ENCODE measurements at regions of chr17 and their contacts with region 1.

Region 1: GRCh38 chr17:20244671-20245070 is 222.7 kb downstream of the LGALS9B start:
- DNase-seq: no peak
- ATAC-seq: no peak
- H3K4me3 ChIP-seq: no peak overlapping the region
- H3K27ac ChIP-seq: no peak overlapping the region
- H3K4me1 ChIP-seq: no peaks in the 10 kb centered on the region
- H3K27me3 ChIP-seq: no peaks in the 10 kb centered on the region

Region 2: GRCh38 chr17:19904924-19905323 is 339.7 kb before region 1 on chr17:
- intact Hi-C with region 1: no loop called
- DNase-seq: peak; percentile 38 to 83 (median 78)
- ATAC-seq: peak; percentile 45 to 51
- H3K4me3 ChIP-seq: no peak overlapping the region
- H3K27ac ChIP-seq: no peak overlapping the region
- H3K4me1 ChIP-seq: no peaks in the 10 kb centered on the region
- H3K27me3 ChIP-seq: no peaks in the 10 kb centered on the region

Region 3: GRCh38 chr17:20189302-20189701 is 55.4 kb before region 1 on chr17:
- intact Hi-C with region 1: loop called in 1 of 4 experiments (anchors 10 kb)
- DNase-seq: no peak
- ATAC-seq: peak in 1 of 2 donors; percentile 26
- H3K4me3 ChIP-seq: no peak overlapping the region
- H3K27ac ChIP-seq: no peak overlapping the region
- H3K4me1 ChIP-seq: no peaks in the 10 kb centered on the region
- H3K27me3 ChIP-seq: no peaks in the 10 kb centered on the region